ENCODE measurements at regions of chr2 and their contacts with region 1.

Region 1: GRCh38 chr2:83196225-83196624 is 1262.9 kb downstream of the SUCLG1 start:
- DNase-seq: peak; percentile 23
- H3K4me3 ChIP-seq: no peak overlapping the region
- CTCF ChIP-seq: peak; percentile 42

Region 2: DNA sequence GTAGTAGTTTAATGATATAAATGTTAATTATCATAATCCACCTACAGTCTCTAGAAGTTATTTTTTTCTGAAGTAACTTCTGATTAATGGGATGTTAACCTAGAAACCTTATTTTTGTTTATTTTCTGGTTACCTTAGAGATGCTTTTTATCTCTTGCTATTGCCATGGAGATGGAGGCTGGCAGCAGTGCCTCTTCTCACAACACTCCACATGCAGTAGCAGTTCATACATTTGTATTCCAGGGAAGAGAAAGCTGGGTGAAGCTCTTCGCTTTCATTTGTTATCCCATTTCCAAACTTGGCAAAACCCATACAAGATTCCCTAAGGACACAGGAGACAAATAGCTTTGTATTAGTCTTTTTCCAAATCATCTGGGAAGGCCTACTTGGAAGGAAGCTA is 1097.6 kb before region 1 on chr2:
- in situ Hi-C with region 1: loop called (anchors 10 kb)
- DNase-seq: no peak
- H3K4me3 ChIP-seq: no peak overlapping the region
- CTCF ChIP-seq: no peak

Region 3: DNA sequence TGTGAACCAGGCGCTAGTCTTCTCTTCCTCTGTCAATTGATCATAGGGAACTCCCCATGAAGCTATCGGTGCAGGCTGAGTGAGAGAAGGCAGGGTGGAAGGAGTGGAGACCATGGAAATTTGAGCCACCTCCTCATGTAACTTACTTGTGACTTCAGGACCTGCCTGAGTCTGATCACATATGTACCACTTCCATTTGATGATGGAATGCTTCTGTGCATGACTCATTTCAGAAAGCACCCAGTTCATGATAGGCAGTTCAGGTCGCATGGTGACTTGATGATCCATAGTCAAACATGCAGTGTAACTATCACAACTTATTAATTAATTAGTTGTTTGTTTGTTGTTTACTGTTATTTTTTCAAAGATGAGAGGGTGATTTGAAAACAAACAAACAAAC is 33.8 kb before region 1 on chr2:
- in situ Hi-C with region 1: no loop called
- DNase-seq: no peak
- H3K4me3 ChIP-seq: no peak overlapping the region
- CTCF ChIP-seq: no peak

Measured in astrocyte of the cerebellum (primary cell).